ENCODE measurements at regions of chr12 and their contacts with region 1.

Region 1: DNA sequence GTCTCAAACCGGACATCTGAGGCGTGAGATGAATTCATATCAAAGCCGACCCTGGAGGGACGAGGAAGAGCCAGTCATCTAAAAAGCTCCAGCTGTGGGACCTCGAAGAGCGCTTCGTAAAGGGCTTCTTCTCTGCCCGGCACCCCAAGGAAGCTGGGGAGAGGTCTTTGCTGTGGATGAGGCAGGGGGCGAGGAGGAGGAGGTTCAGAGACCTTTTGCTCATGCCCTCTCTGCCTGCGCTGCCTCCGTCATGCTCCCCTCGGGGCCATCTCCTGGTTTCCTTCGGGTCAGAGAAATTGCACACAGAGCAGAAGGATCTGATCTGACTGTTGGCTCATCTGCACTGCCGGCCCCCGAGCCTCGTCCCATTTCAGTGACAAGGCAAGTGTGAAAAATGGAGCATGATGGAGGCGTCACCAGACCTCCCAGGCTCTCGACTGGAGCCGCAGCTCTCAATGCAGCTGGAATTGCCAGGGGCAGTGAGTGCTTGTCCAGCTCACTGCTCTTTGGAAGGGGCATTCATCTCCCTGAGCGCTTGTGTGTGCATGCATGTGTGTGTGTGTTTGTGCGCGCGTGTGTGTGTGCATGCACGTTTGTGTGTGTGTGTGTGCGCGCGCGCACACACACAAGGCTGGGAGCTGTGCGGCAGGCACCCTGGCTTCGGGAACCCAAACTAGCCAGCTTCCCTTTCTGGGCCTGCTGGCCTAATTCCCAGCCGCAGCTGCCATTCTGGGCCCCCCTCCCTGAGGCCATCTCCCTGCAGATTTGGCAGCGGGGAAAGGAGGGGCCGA is 9.2 kb downstream of the CABP1 start:
- DNase-seq: no peak

Region 2: DNA sequence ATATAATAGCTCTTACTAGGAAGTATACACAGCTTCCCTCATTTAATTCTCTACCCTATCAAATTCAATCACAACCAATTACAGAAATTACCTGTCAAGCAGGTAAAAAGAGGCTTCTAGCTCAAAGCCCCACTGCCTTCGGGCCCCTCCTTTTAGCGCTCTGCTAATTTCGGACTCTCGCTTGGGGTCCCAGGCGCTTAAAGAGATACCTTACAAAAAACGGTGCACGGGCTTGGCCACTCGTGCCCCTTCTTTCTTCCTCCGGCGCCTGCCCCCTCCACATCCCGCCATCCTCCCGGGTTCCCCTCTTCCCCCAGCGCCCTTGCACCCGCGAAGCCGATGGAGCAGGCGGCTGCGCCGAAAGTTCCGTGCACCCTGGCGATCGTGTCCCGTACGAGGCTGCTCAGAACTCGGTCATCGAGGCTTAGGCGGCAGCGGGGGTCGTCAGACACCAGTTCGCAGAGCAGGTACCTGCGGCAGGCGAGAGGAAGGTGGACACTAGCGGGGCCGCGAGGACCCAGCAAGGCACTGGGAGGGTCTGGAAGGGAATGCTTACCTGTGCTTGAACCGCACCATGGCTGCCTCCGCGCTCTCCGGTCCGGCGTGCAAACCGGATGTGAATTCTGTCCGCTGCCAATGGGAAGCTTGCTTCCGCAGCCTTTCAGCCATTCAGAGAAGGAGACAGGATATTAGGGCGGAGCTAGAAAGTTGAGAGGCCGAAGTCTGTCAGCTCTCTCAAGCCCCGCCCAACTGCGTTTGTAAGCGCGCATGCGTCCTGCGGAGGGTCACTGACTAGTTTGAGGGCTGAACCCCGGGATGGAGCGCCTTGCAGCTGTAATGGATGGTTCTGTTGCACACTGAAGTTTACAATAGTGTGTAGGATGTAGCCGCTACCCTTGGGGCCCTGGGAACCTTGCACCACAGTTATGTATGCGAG is 68.6 kb before region 1 on chr12 and contains the start of gene POP5:
- CTCF ChIA-PET with region 1: interaction called, 15 read pairs
- POLR2A ChIA-PET with region 1: interaction called, 10 read pairs
- DNase-seq: peak; percentile 91

Region 3: GRCh38 chr12:120783197-120783596 is 133.6 kb after region 1 on chr12:
- CTCF ChIA-PET with region 1: no interaction called
- POLR2A ChIA-PET with region 1: no interaction called
- DNase-seq: no peak

Measured in HEK293T (cell line).